ENCODE measurements at regions of chr19 and their contacts with region 1.

Region 1: GRCh38 chr19:19342756-19343322 is 22.2 kb downstream of the MAU2 start:
- DNase-seq: peak; percentile 26
- ATAC-seq: peak; percentile 93
- H3K4me3 ChIP-seq: no peak overlapping the region
- H3K27ac ChIP-seq: no peak overlapping the region
- H3K4me1 ChIP-seq: no peaks in the 10 kb centered on the region
- H3K27me3 ChIP-seq: no peaks in the 10 kb centered on the region
- CTCF ChIP-seq: peak; percentile 59 to 95 (median 93); a peak in 5 of 6 replicates
- POLR2A ChIP-seq: no peak
- RAD21 ChIP-seq: peak; percentile 71

Region 2: GRCh38 chr19:19040417-19040816 is 302.4 kb before region 1 on chr19:
- CTCF ChIA-PET with region 1: no interaction called
- POLR2A ChIA-PET with region 1: no interaction called
- RAD21 ChIA-PET with region 1: no interaction called
- intact Hi-C with region 1: loop called (anchors 10 kb)
- DNase-seq: no peak
- ATAC-seq: no peak
- H3K4me3 ChIP-seq: no peak overlapping the region
- H3K27ac ChIP-seq: no peak overlapping the region
- H3K4me1 ChIP-seq: no peaks in the 10 kb centered on the region
- H3K27me3 ChIP-seq: no peaks in the 10 kb centered on the region
- CTCF ChIP-seq: no peak
- POLR2A ChIP-seq: no peak
- RAD21 ChIP-seq: no peak

Region 3: DNA sequence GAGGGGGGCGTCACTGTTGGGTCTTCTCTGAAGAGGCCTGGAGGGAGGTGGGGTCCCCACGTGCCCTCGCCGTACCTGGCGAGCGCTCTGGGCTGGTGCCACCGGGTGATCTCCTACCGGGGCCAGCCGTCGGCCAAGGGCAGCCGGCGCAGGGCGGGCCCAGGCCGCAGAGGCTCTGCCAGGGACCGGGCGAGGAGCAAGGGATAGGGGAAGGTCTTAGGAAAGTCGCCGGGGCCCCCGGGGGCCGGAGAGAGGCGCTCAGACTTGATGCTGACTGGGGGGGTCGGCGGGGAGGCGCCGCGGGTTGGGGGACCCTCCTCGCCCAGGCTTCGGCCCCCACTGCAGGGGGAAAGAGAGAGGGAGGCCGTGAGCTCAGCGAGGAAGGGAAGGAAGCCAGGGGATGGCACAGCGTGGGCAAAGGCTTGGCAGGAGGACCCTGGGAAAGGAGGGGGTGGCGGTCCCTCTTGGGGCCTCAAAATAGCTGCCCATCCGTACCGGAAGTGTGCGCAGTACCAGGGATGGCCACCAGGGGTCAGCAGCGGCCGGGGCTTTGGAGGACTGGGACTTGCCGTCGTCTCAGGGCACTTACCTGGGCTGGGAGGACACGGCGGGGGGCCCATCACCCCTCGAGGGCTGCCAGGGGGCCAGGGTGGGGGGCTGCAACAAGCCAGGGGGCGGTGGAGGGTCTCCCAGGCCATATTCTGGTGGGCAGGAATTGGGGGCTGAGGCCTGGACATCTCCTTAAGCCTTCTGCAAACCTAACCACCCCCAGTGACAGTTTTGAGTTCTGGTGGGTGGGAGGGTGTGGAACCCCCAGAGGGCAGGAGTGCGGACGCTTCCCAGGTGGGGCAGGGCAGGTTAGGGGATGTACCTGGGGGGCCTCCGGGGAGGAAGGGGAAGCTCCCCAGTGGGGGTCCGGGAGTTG is 196.9 kb before region 1 on chr19:
- CTCF ChIA-PET with region 1: interaction called, 15 read pairs
- POLR2A ChIA-PET with region 1: no interaction called
- RAD21 ChIA-PET with region 1: no interaction called
- intact Hi-C with region 1: loop called (anchors 1 kb)
- DNase-seq: no peak
- ATAC-seq: peak; percentile 92
- H3K4me3 ChIP-seq: no peak overlapping the region
- H3K27ac ChIP-seq: no peak overlapping the region
- H3K4me1 ChIP-seq: no peaks in the 10 kb centered on the region
- H3K27me3 ChIP-seq: no peaks in the 10 kb centered on the region
- CTCF ChIP-seq: peak; percentile 79 to 96 (median 86)
- POLR2A ChIP-seq: no peak
- RAD21 ChIP-seq: peak; percentile 91

Region 4: GRCh38 chr19:19185853-19186740 is 156.7 kb before region 1 on chr19:
- CTCF ChIA-PET with region 1: interaction called, 4 read pairs
- POLR2A ChIA-PET with region 1: no interaction called
- RAD21 ChIA-PET with region 1: interaction called in 1 of 2 experiments, 3 read pairs
- intact Hi-C with region 1: loop called (anchors 2 kb)
- DNase-seq: peak; percentile 50
- ATAC-seq: peak; percentile 98
- H3K4me3 ChIP-seq: no peak overlapping the region
- H3K27ac ChIP-seq: peak overlapping the region; percentile 11; the same call in 1 of the 2 replicates
- H3K4me1 ChIP-seq: peaks cover 11 to 28% of the 10 kb centered on the region in 2 experiments
- H3K27me3 ChIP-seq: no peaks in the 10 kb centered on the region
- CTCF ChIP-seq: peak; percentile 76 to 91 (median 88); a peak in 5 of 6 replicates
- POLR2A ChIP-seq: no peak
- RAD21 ChIP-seq: peak; percentile 78

Region 5: GRCh38 chr19:19327672-19328071 is 15.2 kb before region 1 on chr19:
- CTCF ChIA-PET with region 1: interaction called, 10 read pairs
- POLR2A ChIA-PET with region 1: no interaction called
- RAD21 ChIA-PET with region 1: no interaction called
- intact Hi-C with region 1: no loop called
- DNase-seq: no peak
- ATAC-seq: no peak
- H3K4me3 ChIP-seq: no peak overlapping the region
- H3K27ac ChIP-seq: no peak overlapping the region
- H3K4me1 ChIP-seq: no peaks in the 10 kb centered on the region
- H3K27me3 ChIP-seq: no peaks in the 10 kb centered on the region
- CTCF ChIP-seq: no peak
- POLR2A ChIP-seq: no peak
- RAD21 ChIP-seq: no peak

Region 6: GRCh38 chr19:19361075-19361594 is 18.3 kb after region 1 on chr19:
- CTCF ChIA-PET with region 1: interaction called, 11 read pairs
- POLR2A ChIA-PET with region 1: interaction called, 3 read pairs
- RAD21 ChIA-PET with region 1: no interaction called
- intact Hi-C with region 1: no loop called
- DNase-seq: peak; percentile 85
- ATAC-seq: peak; percentile 87
- H3K4me3 ChIP-seq: no peak overlapping the region
- H3K27ac ChIP-seq: peak overlapping the region; percentile 3; the same call in 1 of the 2 replicates
- H3K4me1 ChIP-seq: peaks cover 12 to 30% of the 10 kb centered on the region in 2 experiments
- H3K27me3 ChIP-seq: no peaks in the 10 kb centered on the region
- CTCF ChIP-seq: peak; percentile 64 to 75 (median 71); a peak in 5 of 6 replicates
- POLR2A ChIP-seq: no peak
- RAD21 ChIP-seq: peak; percentile 54